Calu3 (cell line): ENCODE measurements at regions of chr2 and their contacts with region 1.

Region 1: GRCh38 chr2:59816075-59816474 is 737.4 kb downstream of the BCL11A start:
- DNase-seq: no peak
- H3K4me3 Mint-ChIP-seq: no peak overlapping the region
- H3K27ac Mint-ChIP-seq: no peak overlapping the region
- H3K4me1 Mint-ChIP-seq: no peaks in the 10 kb centered on the region
- H3K27me3 Mint-ChIP-seq: peaks cover 16% of the 10 kb centered on the region
- CTCF ChIP-seq: no peak

Region 2: GRCh38 chr2:59462422-59463197 is 353.5 kb before region 1 on chr2:
- CTCF ChIA-PET with region 1: no interaction called
- intact Hi-C with region 1: loop called (anchors 10 kb)
- DNase-seq: no peak
- H3K4me3 Mint-ChIP-seq: no peak overlapping the region
- H3K27ac Mint-ChIP-seq: no peak overlapping the region
- H3K4me1 Mint-ChIP-seq: no peaks in the 10 kb centered on the region
- H3K27me3 Mint-ChIP-seq: no peaks in the 10 kb centered on the region
- CTCF ChIP-seq: no peak

Region 3: DNA sequence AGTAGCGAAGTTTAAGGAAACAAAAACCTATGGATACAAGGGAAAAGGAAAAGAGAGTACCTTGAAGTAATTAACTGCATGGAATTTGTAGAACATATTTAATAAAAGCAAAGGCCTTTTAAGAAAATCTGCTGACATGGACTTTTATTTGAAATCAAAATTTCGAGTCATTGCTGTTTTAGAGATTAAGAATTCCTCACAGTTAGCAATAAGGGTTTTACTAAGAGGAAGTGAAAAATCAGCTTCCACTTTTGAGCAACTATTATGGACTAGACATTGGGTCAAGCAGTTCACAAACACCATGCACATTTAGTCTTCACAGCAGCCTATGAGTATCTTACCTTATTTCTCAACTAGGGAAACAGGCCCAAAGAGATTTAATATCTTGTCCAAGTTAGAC is 138.9 kb before region 1 on chr2:
- CTCF ChIA-PET with region 1: no interaction called
- intact Hi-C with region 1: no loop called
- DNase-seq: no peak
- H3K4me3 Mint-ChIP-seq: no peak overlapping the region
- H3K27ac Mint-ChIP-seq: no peak overlapping the region
- H3K4me1 Mint-ChIP-seq: no peaks in the 10 kb centered on the region
- H3K27me3 Mint-ChIP-seq: no peaks in the 10 kb centered on the region
- CTCF ChIP-seq: no peak